T-cell (primary cell): ENCODE measurements at regions of chr19 and their contacts with region 1.

Region 1: GRCh38 chr19:43595999-43596841 is at the starts of genes IRGQ and ZNF576:
- DNase-seq: peak; percentile 98 to 100 (median 99)
- ATAC-seq: peak; percentile 81 to 85 (median 84)
- H3K4me3 ChIP-seq: peak within 1 kb of the TSS; percentile 82 to 88
- H3K4me3 Mint-ChIP-seq: peak within 1 kb of the TSS; percentile 92 to 99 (median 95)
- H3K27ac ChIP-seq: peak within 1 kb of the TSS; percentile 95
- H3K27ac Mint-ChIP-seq: peak within 1 kb of the TSS; percentile 99 to 100
- H3K4me1 ChIP-seq: peaks cover 9 to 43% of the 10 kb centered on the region in 2 experiments
- H3K4me1 Mint-ChIP-seq: peaks cover 43 to 47% (median 46%) of the 10 kb centered on the region in 3 donors
- H3K27me3 ChIP-seq: no peaks in the 10 kb centered on the region
- H3K27me3 Mint-ChIP-seq: no peaks in the 10 kb centered on the region
- total RNA-seq, gene IRGQ: 17.5 to 30.2 (median 19.9) TPM
- total RNA-seq, gene ZNF576: 5.4 to 19.6 (median 16.9) TPM

Region 2: DNA sequence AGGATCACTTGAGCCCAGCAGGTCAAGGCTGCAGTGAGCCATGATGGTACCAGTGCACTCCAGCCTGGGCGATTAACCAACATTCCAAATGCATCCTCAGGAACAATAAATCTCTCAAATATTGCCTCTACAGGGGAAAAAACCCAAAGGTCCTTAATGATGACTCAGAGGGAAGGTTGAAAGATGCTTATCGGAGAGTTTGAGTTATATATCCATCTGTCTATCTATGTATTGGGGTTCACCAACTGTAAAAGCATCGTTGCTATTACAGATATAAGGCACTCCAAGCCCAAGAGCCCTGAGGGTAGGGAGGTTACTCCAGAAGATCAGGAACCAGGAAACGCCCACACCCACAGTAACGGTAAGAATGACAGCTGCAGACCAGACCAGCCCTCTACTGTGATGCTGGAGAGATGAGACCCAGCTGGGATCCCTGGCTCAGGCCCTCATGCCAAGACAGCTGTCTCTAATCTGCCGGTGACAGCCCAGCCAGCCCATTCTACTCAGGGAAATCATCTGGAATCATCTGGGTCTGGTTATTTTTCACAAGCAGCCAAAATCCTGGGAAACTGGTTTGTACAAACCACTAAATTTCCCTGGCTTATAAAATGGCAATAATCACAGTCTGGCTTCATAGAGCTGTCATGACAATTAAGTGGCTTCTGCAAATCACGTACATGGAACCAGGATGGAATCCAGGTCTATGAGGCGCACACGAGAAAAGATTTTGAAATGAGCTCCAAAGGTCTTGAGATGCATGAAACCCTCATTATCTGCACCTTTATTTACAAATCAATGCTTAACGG is 157.7 kb before region 1 on chr19:
- CTCF ChIA-PET with region 1: interaction called, 3 to 12 read pairs
- POLR2A ChIA-PET with region 1: interaction called in 1 of 2 experiments, 6 read pairs
- DNase-seq: peak in 3 of 35 experiments; percentile 8 to 30 (median 23)
- ATAC-seq: peak; percentile 10 to 35 (median 16)
- H3K4me3 ChIP-seq: peak overlapping the region; percentile 16 to 25
- H3K4me3 Mint-ChIP-seq: peak overlapping the region; percentile 13 to 67 (median 28)
- H3K27ac ChIP-seq: peak overlapping the region; percentile 78
- H3K27ac Mint-ChIP-seq: peak overlapping the region; percentile 93 to 97
- H3K4me1 ChIP-seq: peaks cover 28 to 36% of the 10 kb centered on the region in 2 experiments
- H3K4me1 Mint-ChIP-seq: peaks cover 58 to 69% (median 62%) of the 10 kb centered on the region in 3 donors
- H3K27me3 ChIP-seq: no peaks in the 10 kb centered on the region
- H3K27me3 Mint-ChIP-seq: no peaks in the 10 kb centered on the region

Region 3: GRCh38 chr19:43463381-43464136 is 132.7 kb before region 1 on chr19:
- CTCF ChIA-PET with region 1: interaction called in 1 of 2 experiments, 10 read pairs
- POLR2A ChIA-PET with region 1: interaction called in 1 of 2 experiments, 3 read pairs
- DNase-seq: peak; percentile 98 to 100 (median 100)
- ATAC-seq: peak; percentile 81 to 89 (median 88)
- H3K4me3 ChIP-seq: peak overlapping the region; percentile 67 to 96
- H3K4me3 Mint-ChIP-seq: peak overlapping the region; percentile 88 to 95 (median 90)
- H3K27ac ChIP-seq: peak overlapping the region; percentile 90
- H3K27ac Mint-ChIP-seq: peak overlapping the region; percentile 95 to 97
- H3K4me1 ChIP-seq: peaks cover 18 to 54% of the 10 kb centered on the region in 2 experiments
- H3K4me1 Mint-ChIP-seq: peaks cover 56 to 59% (median 57%) of the 10 kb centered on the region in 3 donors
- H3K27me3 ChIP-seq: no peaks in the 10 kb centered on the region
- H3K27me3 Mint-ChIP-seq: no peaks in the 10 kb centered on the region

Region 4: GRCh38 chr19:43555185-43555770 is 40.9 kb before region 1 on chr19:
- CTCF ChIA-PET with region 1: interaction called, 16 to 84 read pairs
- POLR2A ChIA-PET with region 1: no interaction called
- DNase-seq: peak; percentile 59 to 90 (median 80)
- ATAC-seq: peak; percentile 93 to 98 (median 96)
- H3K4me3 ChIP-seq: no peak overlapping the region
- H3K4me3 Mint-ChIP-seq: no peak overlapping the region
- H3K27ac ChIP-seq: no peak overlapping the region
- H3K27ac Mint-ChIP-seq: peak overlapping the region; percentile 58 to 70
- H3K4me1 ChIP-seq: peaks cover 0 to 11% of the 10 kb centered on the region in 2 experiments
- H3K4me1 Mint-ChIP-seq: peaks cover 14 to 24% (median 17%) of the 10 kb centered on the region in 3 donors
- H3K27me3 ChIP-seq: no peaks in the 10 kb centered on the region
- H3K27me3 Mint-ChIP-seq: no peaks in the 10 kb centered on the region

Region 5: GRCh38 chr19:43668406-43669158 is 72.4 kb after region 1 on chr19:
- CTCF ChIA-PET with region 1: interaction called in 1 of 2 experiments, 11 read pairs
- POLR2A ChIA-PET with region 1: interaction called in 1 of 2 experiments, 5 read pairs
- DNase-seq: peak; percentile 87 to 98 (median 95)
- ATAC-seq: peak; percentile 82 to 87 (median 85)
- H3K4me3 ChIP-seq: peak overlapping the region; percentile 58 to 64
- H3K4me3 Mint-ChIP-seq: peak overlapping the region; percentile 82 to 87 (median 84)
- H3K27ac ChIP-seq: peak overlapping the region; percentile 22
- H3K27ac Mint-ChIP-seq: peak overlapping the region; percentile 76 to 79
- H3K4me1 ChIP-seq: peaks cover 26 to 53% of the 10 kb centered on the region in 2 experiments
- H3K4me1 Mint-ChIP-seq: peaks cover 42 to 50% (median 49%) of the 10 kb centered on the region in 3 donors
- H3K27me3 ChIP-seq: peaks cover 0 to 6% of the 10 kb centered on the region in 2 experiments
- H3K27me3 Mint-ChIP-seq: no peaks in the 10 kb centered on the region